CD8-positive, alpha-beta T cell (primary cell): ENCODE measurements at regions of chr4 and their contacts with region 1.

Region 1: DNA sequence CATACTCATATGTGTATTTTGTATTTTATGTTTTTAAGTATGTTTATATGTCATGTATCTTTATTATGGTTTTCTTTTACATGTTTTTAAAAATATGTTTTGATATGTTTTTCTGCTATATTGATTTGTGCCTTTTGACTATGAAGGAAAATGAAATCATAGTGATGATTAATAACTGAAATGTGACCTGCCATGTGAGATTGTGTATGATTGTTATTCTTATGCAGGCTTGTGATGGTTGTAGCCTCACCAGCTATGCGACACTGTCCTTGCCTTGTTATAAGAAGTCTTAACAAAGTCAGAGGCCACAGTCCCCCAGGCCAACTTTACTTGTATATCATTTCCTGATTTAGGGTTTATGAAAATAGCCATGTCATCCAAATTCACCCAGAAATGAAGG is 83.2 kb downstream of the TMEM131L start:
- DNase-seq: no peak
- ATAC-seq: no peak
- H3K4me3 ChIP-seq: no peak overlapping the region
- H3K4me3 Mint-ChIP-seq: no peak overlapping the region
- H3K27ac ChIP-seq: peak overlapping the region in 1 of 2 experiments; percentile 14
- H3K27ac Mint-ChIP-seq: peak overlapping the region; percentile 55
- H3K4me1 ChIP-seq: peaks cover 7% of the 10 kb centered on the region
- H3K4me1 Mint-ChIP-seq: peaks cover 59% of the 10 kb centered on the region
- H3K27me3 ChIP-seq: no peaks in the 10 kb centered on the region
- H3K27me3 Mint-ChIP-seq: no peaks in the 10 kb centered on the region
- CTCF ChIP-seq: no peak

Region 2: DNA sequence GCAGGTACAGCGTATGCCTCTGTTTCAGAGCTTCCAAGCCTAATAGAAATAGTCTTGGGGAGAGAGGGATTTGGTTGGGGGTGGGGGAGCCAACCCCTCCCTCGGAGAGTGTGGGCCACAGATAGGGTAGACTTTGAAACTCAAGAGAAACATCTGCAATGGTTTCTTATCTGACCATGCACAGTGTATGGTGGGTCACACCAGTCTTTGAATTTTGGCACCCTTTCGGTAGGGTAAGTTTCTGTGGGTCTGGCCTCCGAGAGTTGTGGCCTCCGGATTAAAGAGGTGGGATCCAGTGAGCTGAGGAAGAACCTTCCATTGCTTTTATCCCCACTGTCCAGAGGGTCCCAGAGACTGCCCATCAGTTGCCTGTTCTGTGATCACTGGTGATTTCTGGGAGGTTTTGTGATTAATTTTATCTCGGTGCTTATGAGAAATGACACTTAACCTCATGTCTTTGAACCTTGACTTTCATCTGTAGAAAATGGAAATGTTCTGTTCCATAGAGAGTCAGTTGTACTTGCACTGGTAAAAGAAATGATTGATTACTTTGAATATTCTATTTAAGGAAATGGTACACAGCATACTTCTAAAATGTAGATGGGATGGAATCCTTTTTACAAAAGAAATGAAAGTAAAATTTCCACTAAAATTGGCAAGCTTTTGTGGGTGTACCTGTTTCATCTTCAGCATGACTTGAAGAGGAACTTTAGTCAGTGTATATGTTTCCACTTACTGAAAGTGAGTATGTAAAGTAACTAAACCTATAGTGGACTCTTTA is 20.5 kb before region 1 on chr4:
- CTCF ChIA-PET with region 1: interaction called, 3 read pairs
- POLR2A ChIA-PET with region 1: interaction called, 5 read pairs
- intact Hi-C with region 1: loop called in 1 of 2 experiments (anchors 2 kb)
- DNase-seq: no peak
- ATAC-seq: peak; percentile 21
- H3K4me3 ChIP-seq: peak overlapping the region in 1 of 2 experiments; percentile 28
- H3K4me3 Mint-ChIP-seq: peak overlapping the region; percentile 77
- H3K27ac ChIP-seq: peak overlapping the region; percentile 17 to 76
- H3K27ac Mint-ChIP-seq: peak overlapping the region; percentile 94
- H3K4me1 ChIP-seq: peaks cover 96% of the 10 kb centered on the region
- H3K4me1 Mint-ChIP-seq: peaks cover 88% of the 10 kb centered on the region
- H3K27me3 ChIP-seq: no peaks in the 10 kb centered on the region
- H3K27me3 Mint-ChIP-seq: no peaks in the 10 kb centered on the region
- CTCF ChIP-seq: no peak

Region 3: DNA sequence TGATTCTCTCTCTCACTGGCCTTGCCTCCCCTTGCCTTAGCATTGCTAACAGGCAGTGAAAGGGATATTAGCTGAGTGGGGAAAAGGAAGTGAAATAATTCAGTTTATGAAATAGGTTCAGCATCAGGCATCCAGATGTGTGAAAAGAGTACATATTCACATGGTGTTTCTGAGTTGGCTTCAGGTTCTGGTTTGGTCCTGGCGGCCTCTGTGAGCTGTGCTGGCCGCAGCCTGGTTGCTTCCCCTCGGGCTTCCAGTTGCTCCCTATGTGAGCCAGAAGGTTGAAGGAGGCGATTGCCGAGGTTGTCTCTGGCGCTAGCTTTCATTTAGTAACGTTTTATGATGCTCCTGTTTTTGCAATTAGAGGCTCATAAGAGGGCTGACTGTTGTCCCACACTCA is 35.6 kb after region 1 on chr4:
- CTCF ChIA-PET with region 1: no interaction called
- POLR2A ChIA-PET with region 1: no interaction called
- intact Hi-C with region 1: no loop called
- DNase-seq: no peak
- ATAC-seq: no peak
- H3K4me3 ChIP-seq: no peak overlapping the region
- H3K4me3 Mint-ChIP-seq: no peak overlapping the region
- H3K27ac ChIP-seq: no peak overlapping the region
- H3K27ac Mint-ChIP-seq: peak overlapping the region; percentile 67
- H3K4me1 ChIP-seq: no peaks in the 10 kb centered on the region
- H3K4me1 Mint-ChIP-seq: peaks cover 19% of the 10 kb centered on the region
- H3K27me3 ChIP-seq: no peaks in the 10 kb centered on the region
- H3K27me3 Mint-ChIP-seq: no peaks in the 10 kb centered on the region
- CTCF ChIP-seq: no peak